ENCODE measurements at regions of chr3 and their contacts with region 1.

Region 1: DNA sequence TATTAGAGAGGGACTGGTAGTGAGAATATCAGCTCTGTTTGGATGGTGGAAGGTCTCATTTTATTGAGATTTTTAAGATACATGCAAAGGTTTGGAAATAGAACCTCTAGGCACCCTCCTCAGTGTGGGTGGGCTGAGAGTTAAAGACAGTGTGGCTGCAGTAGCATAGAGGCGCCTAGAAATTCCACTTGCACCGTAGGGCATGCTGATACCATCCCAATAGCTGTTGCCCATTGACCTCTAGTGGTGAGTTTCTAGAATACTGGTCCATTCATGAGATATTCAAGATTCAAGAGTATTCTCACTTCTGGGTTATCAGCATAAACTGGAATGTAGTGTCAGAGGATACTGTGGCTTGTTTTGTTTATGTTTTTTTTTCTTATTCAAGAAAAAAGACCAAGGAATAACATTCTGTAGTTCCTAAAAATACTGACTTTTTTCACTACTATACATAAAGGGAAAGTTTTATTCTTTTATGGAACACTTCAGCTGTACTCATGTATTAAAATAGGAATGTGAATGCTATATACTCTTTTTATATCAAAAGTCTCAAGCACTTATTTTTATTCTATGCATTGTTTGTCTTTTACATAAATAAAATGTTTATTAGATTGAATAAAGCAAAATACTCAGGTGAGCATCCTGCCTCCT is 87.2 kb downstream of the TGFBR2 start:
- DNase-seq: peak in 7 of 9 donors; percentile 63 to 79 (median 72)
- ATAC-seq: peak; percentile 94
- H3K4me3 ChIP-seq: no peak overlapping the region
- H3K4me3 Mint-ChIP-seq: peak overlapping the region in 3 of 10 donors; percentile 15 to 49 (median 37)
- H3K27ac ChIP-seq: no peak overlapping the region
- H3K27ac Mint-ChIP-seq: peak overlapping the region in 8 of 9 donors; percentile 33 to 98 (median 86)
- H3K4me1 ChIP-seq: peaks cover 11 to 30% of the 10 kb centered on the region in 2 donors
- H3K4me1 Mint-ChIP-seq: peaks cover 25 to 94% (median 85%) of the 10 kb centered on the region in 7 donors
- H3K27me3 ChIP-seq: no peaks in the 10 kb centered on the region
- H3K27me3 Mint-ChIP-seq: no peaks in the 10 kb centered on the region

Region 2: GRCh38 chr3:30012941-30013543 is 680.6 kb before region 1 on chr3:
- CTCF ChIA-PET with region 1: no interaction called
- POLR2A ChIA-PET with region 1: no interaction called
- intact Hi-C with region 1: loop called (anchors 1 kb)
- DNase-seq: peak in 8 of 9 donors; percentile 4 to 32 (median 22)
- ATAC-seq: peak; percentile 56
- H3K4me3 ChIP-seq: no peak overlapping the region
- H3K4me3 Mint-ChIP-seq: no peak overlapping the region
- H3K27ac ChIP-seq: no peak overlapping the region
- H3K27ac Mint-ChIP-seq: no peak overlapping the region
- H3K4me1 ChIP-seq: no peaks in the 10 kb centered on the region
- H3K4me1 Mint-ChIP-seq: peaks cover 0 to 5% (median 0%) of the 10 kb centered on the region in 7 donors
- H3K27me3 ChIP-seq: no peaks in the 10 kb centered on the region
- H3K27me3 Mint-ChIP-seq: peaks cover 0 to 13% (median 6%) of the 10 kb centered on the region in 5 donors

Region 3: GRCh38 chr3:30199096-30199759 is 494.4 kb before region 1 on chr3:
- CTCF ChIA-PET with region 1: interaction called, 17 read pairs
- POLR2A ChIA-PET with region 1: interaction called, 4 read pairs
- intact Hi-C with region 1: loop called (anchors 1 to 2 kb)
- DNase-seq: peak; percentile 25 to 66 (median 58)
- ATAC-seq: peak; percentile 61
- H3K4me3 ChIP-seq: no peak overlapping the region
- H3K4me3 Mint-ChIP-seq: no peak overlapping the region
- H3K27ac ChIP-seq: no peak overlapping the region
- H3K27ac Mint-ChIP-seq: no peak overlapping the region
- H3K4me1 ChIP-seq: no peaks in the 10 kb centered on the region
- H3K4me1 Mint-ChIP-seq: peaks cover 0 to 7% (median 4%) of the 10 kb centered on the region in 7 donors
- H3K27me3 ChIP-seq: no peaks in the 10 kb centered on the region
- H3K27me3 Mint-ChIP-seq: peaks cover 0 to 6% (median 0%) of the 10 kb centered on the region in 5 donors

Region 4: GRCh38 chr3:30437171-30437601 is 256.4 kb before region 1 on chr3:
- CTCF ChIA-PET with region 1: interaction called, 3 read pairs
- POLR2A ChIA-PET with region 1: no interaction called
- intact Hi-C with region 1: loop called in 1 of 2 experiments (anchors 1 kb)
- DNase-seq: no peak
- ATAC-seq: no peak
- H3K4me3 ChIP-seq: no peak overlapping the region
- H3K4me3 Mint-ChIP-seq: peak overlapping the region in 6 of 10 donors; percentile 12 to 77 (median 22)
- H3K27ac ChIP-seq: no peak overlapping the region
- H3K27ac Mint-ChIP-seq: peak overlapping the region in 5 of 9 donors; percentile 15 to 94 (median 75)
- H3K4me1 ChIP-seq: peaks cover 0 to 23% of the 10 kb centered on the region in 2 donors
- H3K4me1 Mint-ChIP-seq: peaks cover 6 to 47% (median 35%) of the 10 kb centered on the region in 7 donors
- H3K27me3 ChIP-seq: no peaks in the 10 kb centered on the region
- H3K27me3 Mint-ChIP-seq: no peaks in the 10 kb centered on the region

Region 5: DNA sequence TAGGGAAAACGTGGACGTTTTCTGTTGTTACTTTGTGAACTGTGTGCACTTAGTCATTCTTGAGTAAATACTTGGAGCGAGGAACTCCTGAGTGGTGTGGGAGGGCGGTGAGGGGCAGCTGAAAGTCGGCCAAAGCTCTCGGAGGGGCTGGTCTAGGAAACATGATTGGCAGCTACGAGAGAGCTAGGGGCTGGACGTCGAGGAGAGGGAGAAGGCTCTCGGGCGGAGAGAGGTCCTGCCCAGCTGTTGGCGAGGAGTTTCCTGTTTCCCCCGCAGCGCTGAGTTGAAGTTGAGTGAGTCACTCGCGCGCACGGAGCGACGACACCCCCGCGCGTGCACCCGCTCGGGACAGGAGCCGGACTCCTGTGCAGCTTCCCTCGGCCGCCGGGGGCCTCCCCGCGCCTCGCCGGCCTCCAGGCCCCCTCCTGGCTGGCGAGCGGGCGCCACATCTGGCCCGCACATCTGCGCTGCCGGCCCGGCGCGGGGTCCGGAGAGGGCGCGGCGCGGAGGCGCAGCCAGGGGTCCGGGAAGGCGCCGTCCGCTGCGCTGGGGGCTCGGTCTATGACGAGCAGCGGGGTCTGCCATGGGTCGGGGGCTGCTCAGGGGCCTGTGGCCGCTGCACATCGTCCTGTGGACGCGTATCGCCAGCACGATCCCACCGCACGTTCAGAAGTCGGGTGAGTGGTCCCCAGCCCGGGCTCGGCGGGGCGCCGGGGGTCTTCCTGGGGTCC is 87.1 kb before region 1 on chr3 and contains the start of gene TGFBR2:
- CTCF ChIA-PET with region 1: interaction called, 20 read pairs
- POLR2A ChIA-PET with region 1: interaction called, 9 read pairs
- intact Hi-C with region 1: loop called (anchors 1 to 2 kb)
- DNase-seq: peak; percentile 57 to 85 (median 69)
- ATAC-seq: peak; percentile 84
- H3K4me3 ChIP-seq: peak within 1 kb of the TSS; percentile 76
- H3K4me3 Mint-ChIP-seq: peak within 1 kb of the TSS; percentile 88 to 100 (median 99)
- H3K27ac ChIP-seq: peak within 1 kb of the TSS; percentile 91
- H3K27ac Mint-ChIP-seq: peak within 1 kb of the TSS; percentile 93 to 100 (median 98)
- H3K4me1 ChIP-seq: peaks cover 32 to 39% of the 10 kb centered on the region in 2 donors
- H3K4me1 Mint-ChIP-seq: peaks cover 45 to 68% (median 55%) of the 10 kb centered on the region in 7 donors
- H3K27me3 ChIP-seq: no peaks in the 10 kb centered on the region
- H3K27me3 Mint-ChIP-seq: no peaks in the 10 kb centered on the region
- total RNA-seq, gene TGFBR2: 63.0 to 171 (median 155) TPM

Region 6: DNA sequence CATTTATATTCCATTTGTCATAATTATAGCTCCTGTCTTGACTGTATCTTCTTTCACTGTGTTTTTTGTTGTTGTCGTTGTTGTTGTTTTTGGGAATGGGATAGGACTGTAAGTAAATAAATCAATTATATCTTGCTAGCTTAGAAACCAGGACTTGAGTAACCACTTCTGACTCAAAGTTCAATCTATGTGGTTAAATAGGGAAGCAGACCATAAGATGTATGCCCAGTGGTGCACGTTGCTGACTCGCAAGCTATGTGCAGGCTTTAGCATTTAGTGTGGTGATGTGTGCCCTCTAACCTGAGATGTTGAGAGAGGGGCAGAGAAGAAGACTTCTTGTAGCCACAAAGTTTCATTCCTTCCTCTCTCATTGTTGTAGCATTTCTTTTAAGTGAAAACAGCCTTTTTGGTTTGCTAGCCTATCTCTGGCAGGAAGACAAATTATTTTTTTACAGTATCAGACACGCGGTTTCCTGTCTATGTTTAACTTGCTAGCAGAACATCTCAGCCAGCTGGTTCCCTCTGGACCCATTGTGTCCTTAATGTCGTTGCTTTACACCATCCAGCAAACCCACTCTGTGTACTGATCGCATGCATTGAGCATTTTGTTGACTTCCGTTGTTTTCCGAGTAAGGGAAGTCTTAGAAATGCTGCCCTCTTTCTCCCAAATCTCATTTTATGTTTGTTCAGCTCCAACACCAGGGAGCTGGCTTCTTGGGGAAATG is 35.1 kb before region 1 on chr3:
- CTCF ChIA-PET with region 1: interaction called, 3 read pairs
- POLR2A ChIA-PET with region 1: interaction called, 8 read pairs
- intact Hi-C with region 1: loop called in 1 of 2 experiments (anchors 1 kb)
- DNase-seq: peak in 7 of 9 donors; percentile 72 to 86 (median 84)
- ATAC-seq: peak; percentile 71
- H3K4me3 ChIP-seq: peak overlapping the region; percentile 24
- H3K4me3 Mint-ChIP-seq: peak overlapping the region; percentile 71 to 88 (median 80)
- H3K27ac ChIP-seq: peak overlapping the region; percentile 84
- H3K27ac Mint-ChIP-seq: peak overlapping the region; percentile 91 to 99 (median 97)
- H3K4me1 ChIP-seq: peaks cover 82 to 98% of the 10 kb centered on the region in 2 donors
- H3K4me1 Mint-ChIP-seq: peaks cover 67 to 100% (median 94%) of the 10 kb centered on the region in 7 donors
- H3K27me3 ChIP-seq: no peaks in the 10 kb centered on the region
- H3K27me3 Mint-ChIP-seq: no peaks in the 10 kb centered on the region

Region 7: DNA sequence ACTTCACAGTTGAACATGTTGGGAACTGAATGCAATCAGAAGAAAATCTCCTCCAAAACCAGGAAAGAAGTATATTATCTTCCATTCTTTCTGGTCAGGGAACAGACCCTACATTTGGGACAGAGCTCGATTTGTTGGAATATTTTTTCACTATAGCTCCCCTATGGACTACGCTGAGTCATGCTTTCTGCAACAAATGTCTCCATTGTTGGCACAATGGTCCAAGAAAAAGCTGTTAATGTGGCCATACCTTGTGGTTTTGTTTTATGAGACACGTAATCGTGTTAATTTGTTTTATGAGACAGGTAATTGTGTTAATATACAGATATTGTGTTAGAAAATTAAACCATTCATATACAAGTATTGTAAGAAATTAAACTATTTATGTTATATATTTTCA is 14.2 kb after region 1 on chr3:
- CTCF ChIA-PET with region 1: interaction called, 5 read pairs
- POLR2A ChIA-PET with region 1: interaction called, 3 read pairs
- intact Hi-C with region 1: loop called in 1 of 2 experiments (anchors 1 kb)
- DNase-seq: no peak
- ATAC-seq: no peak
- H3K4me3 ChIP-seq: no peak overlapping the region
- H3K4me3 Mint-ChIP-seq: no peak overlapping the region
- H3K27ac ChIP-seq: no peak overlapping the region
- H3K27ac Mint-ChIP-seq: no peak overlapping the region
- H3K4me1 ChIP-seq: peaks cover 0 to 11% of the 10 kb centered on the region in 2 donors
- H3K4me1 Mint-ChIP-seq: peaks cover 5 to 64% (median 41%) of the 10 kb centered on the region in 7 donors
- H3K27me3 ChIP-seq: no peaks in the 10 kb centered on the region
- H3K27me3 Mint-ChIP-seq: no peaks in the 10 kb centered on the region

Measured in naive thymus-derived CD4-positive, alpha-beta T cell (primary cell).